CD14-positive monocyte (primary cell): ENCODE measurements at regions of chr1 and their contacts with region 1.

Region 1: DNA sequence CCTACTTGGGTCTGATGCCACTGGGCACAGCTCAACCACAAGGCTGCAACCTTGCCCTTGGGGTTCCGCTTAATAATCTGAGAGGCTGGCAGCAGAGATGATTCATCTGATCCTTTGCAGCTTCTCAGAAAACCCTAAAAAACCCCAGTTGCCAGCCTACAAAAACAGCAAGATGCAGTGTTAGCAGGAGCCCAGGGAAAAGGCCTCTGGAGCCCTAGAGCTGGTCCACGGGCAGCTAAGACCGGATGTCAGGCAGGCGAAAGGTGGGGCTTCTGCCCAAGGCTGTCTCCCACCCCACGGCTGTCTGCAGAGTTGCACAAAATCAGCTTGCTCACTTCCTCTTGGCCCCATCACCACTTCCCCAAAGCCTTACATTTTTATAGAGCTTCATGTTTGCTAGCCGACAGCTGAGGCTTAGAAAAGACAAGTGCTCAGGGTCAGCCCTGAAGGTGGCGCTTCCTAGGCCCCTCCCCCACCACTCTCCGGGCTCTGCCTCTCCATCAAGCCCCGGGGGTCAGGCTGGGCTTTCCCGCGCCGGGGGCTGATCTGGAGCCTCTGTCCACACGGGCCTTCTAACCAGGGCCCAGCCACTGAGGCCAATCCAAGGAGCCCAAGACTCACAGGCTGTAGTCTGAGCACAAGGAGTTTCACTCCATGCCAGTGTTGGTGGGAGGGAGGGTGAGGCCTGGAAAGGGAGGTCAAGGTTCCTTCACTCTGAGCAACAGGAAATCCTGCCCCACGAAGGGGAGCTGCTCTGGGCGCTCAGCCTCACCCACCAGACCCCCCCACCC is 4.2 kb upstream of the ADORA3 start:
- DNase-seq: peak; percentile 94 to 95 (median 95)
- H3K4me3 ChIP-seq: peak overlapping the region; percentile 1 to 64 (median 24)
- H3K4me3 Mint-ChIP-seq: peak overlapping the region; percentile 49 to 69
- H3K27ac ChIP-seq: peak overlapping the region; percentile 98 to 100
- H3K27ac Mint-ChIP-seq: peak overlapping the region; percentile 89 to 99 (median 99)
- H3K4me1 ChIP-seq: peaks cover 74 to 76% of the 10 kb centered on the region in 2 donors
- H3K4me1 Mint-ChIP-seq: peaks cover 45% of the 10 kb centered on the region
- H3K27me3 ChIP-seq: no peaks in the 10 kb centered on the region
- H3K27me3 Mint-ChIP-seq: no peaks in the 10 kb centered on the region
- CTCF ChIP-seq: no peak

Region 2: DNA sequence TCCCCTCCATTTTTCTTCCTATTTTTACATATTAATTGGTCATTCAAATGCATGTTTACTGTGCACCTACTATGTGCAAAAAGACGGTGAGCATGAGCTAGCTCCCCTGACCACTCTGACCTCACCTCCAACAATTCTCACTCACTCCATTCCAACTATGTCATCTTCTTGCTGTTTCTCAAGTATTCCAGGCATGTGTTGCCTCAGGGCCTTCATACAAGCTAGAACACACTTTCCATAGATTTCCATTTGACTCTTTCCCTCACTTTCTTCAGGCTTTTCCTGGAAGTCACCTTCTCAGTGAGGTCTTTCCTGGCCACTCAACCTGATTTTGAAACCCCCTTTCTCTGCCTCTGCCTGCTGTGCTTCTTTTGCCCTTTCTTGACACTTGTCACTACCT is 184.4 kb before region 1 on chr1:
- intact Hi-C with region 1: no loop called
- DNase-seq: no peak
- H3K4me3 ChIP-seq: no peak overlapping the region
- H3K4me3 Mint-ChIP-seq: no peak overlapping the region
- H3K27ac ChIP-seq: no peak overlapping the region
- H3K27ac Mint-ChIP-seq: no peak overlapping the region
- H3K4me1 ChIP-seq: no peaks in the 10 kb centered on the region
- H3K4me1 Mint-ChIP-seq: no peaks in the 10 kb centered on the region
- H3K27me3 ChIP-seq: no peaks in the 10 kb centered on the region
- H3K27me3 Mint-ChIP-seq: peaks cover 4 to 8% (median 6%) of the 10 kb centered on the region in 3 donors
- CTCF ChIP-seq: no peak

Region 3: GRCh38 chr1:111454859-111455641 is 52.6 kb before region 1 on chr1:
- intact Hi-C with region 1: loop called in 1 of 2 experiments (anchors 10 kb)
- DNase-seq: no peak
- H3K4me3 ChIP-seq: no peak overlapping the region
- H3K4me3 Mint-ChIP-seq: no peak overlapping the region
- H3K27ac ChIP-seq: no peak overlapping the region
- H3K27ac Mint-ChIP-seq: peak overlapping the region in 2 of 7 donors; percentile 41 to 72
- H3K4me1 ChIP-seq: peaks cover 8 to 19% of the 10 kb centered on the region in 2 donors
- H3K4me1 Mint-ChIP-seq: peaks cover 27% of the 10 kb centered on the region
- H3K27me3 ChIP-seq: no peaks in the 10 kb centered on the region
- H3K27me3 Mint-ChIP-seq: peaks cover 0 to 2% (median 0%) of the 10 kb centered on the region in 3 donors
- CTCF ChIP-seq: no peak

Region 4: GRCh38 chr1:111471012-111471411 is 36.6 kb before region 1 on chr1:
- intact Hi-C with region 1: loop called (anchors 5 kb)
- DNase-seq: peak; percentile 91 to 93 (median 92)
- H3K4me3 ChIP-seq: peak overlapping the region in 2 of 3 experiments; percentile 34 to 66
- H3K4me3 Mint-ChIP-seq: no peak overlapping the region
- H3K27ac ChIP-seq: peak overlapping the region; percentile 66 to 96
- H3K27ac Mint-ChIP-seq: no peak overlapping the region
- H3K4me1 ChIP-seq: peaks cover 53 to 61% of the 10 kb centered on the region in 2 donors
- H3K4me1 Mint-ChIP-seq: peaks cover 19% of the 10 kb centered on the region
- H3K27me3 ChIP-seq: no peaks in the 10 kb centered on the region
- H3K27me3 Mint-ChIP-seq: no peaks in the 10 kb centered on the region
- CTCF ChIP-seq: no peak

Region 5: GRCh38 chr1:111600886-111601386 is 93.3 kb after region 1 on chr1:
- intact Hi-C with region 1: no loop called
- DNase-seq: no peak
- H3K4me3 ChIP-seq: no peak overlapping the region
- H3K4me3 Mint-ChIP-seq: no peak overlapping the region
- H3K27ac ChIP-seq: no peak overlapping the region
- H3K27ac Mint-ChIP-seq: peak overlapping the region in 1 of 7 donors; percentile 10
- H3K4me1 ChIP-seq: peaks cover 0 to 6% of the 10 kb centered on the region in 2 donors
- H3K4me1 Mint-ChIP-seq: peaks cover 21% of the 10 kb centered on the region
- H3K27me3 ChIP-seq: no peaks in the 10 kb centered on the region
- H3K27me3 Mint-ChIP-seq: peaks cover 0 to 2% (median 2%) of the 10 kb centered on the region in 3 donors
- CTCF ChIP-seq: no peak

Region 6: DNA sequence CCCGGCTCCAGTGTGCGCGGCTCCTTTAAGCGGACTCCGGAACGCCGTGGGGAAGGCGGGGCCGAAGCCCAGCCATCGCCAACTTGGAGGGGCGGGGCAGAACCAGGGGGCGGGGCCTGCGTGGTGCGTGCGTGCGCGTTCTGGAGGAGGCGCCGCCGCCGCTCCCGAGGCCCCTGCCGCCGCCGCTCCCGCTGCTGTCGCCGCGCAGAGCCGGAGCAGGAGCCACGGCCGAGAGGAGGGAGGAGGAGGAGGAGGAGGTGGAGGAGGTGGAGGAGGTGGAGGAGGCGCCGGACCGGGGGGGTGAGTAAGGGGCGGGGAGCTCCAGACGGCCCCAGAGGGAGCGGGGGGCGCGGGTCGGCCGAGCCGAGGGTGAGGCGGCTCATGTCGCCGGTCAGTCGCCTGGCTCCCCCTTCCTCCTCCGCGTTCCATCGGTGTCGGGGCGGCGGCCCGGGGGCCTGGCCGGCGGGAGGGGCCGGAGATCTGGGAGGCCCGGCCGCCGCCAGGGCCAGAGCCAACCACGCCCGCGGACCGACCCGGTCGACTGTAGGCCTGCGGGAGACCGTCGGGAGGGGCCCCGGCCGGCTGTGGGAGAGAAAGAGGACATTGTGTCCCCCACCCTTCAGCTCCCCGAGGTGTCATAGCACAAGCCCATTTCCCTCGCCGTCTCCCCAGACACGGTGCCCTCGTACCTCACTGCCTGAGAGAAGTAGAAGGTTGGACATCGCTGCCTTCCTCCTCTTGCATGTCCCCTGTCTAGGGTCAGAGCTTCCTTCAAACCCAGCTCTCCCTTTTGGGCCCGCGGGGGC is 112.2 kb after region 1 on chr1 and contains the start of gene RAP1A:
- intact Hi-C with region 1: loop called in 1 of 2 experiments (anchors 2 kb)
- DNase-seq: peak; percentile 82 to 86 (median 85)
- H3K4me3 ChIP-seq: peak within 1 kb of the TSS; percentile 65 to 89 (median 79)
- H3K4me3 Mint-ChIP-seq: peak within 1 kb of the TSS; percentile 79 to 96
- H3K27ac ChIP-seq: peak within 1 kb of the TSS; percentile 86 to 89
- H3K27ac Mint-ChIP-seq: peak within 1 kb of the TSS; percentile 93 to 98 (median 97)
- H3K4me1 ChIP-seq: peaks cover 58 to 70% of the 10 kb centered on the region in 2 donors
- H3K4me1 Mint-ChIP-seq: peaks cover 72% of the 10 kb centered on the region
- H3K27me3 ChIP-seq: no peaks in the 10 kb centered on the region
- H3K27me3 Mint-ChIP-seq: no peaks in the 10 kb centered on the region
- CTCF ChIP-seq: no peak
- polyA plus RNA-seq, gene RAP1A: 41.2 to 79.1 (median 75.3) TPM

Region 7: DNA sequence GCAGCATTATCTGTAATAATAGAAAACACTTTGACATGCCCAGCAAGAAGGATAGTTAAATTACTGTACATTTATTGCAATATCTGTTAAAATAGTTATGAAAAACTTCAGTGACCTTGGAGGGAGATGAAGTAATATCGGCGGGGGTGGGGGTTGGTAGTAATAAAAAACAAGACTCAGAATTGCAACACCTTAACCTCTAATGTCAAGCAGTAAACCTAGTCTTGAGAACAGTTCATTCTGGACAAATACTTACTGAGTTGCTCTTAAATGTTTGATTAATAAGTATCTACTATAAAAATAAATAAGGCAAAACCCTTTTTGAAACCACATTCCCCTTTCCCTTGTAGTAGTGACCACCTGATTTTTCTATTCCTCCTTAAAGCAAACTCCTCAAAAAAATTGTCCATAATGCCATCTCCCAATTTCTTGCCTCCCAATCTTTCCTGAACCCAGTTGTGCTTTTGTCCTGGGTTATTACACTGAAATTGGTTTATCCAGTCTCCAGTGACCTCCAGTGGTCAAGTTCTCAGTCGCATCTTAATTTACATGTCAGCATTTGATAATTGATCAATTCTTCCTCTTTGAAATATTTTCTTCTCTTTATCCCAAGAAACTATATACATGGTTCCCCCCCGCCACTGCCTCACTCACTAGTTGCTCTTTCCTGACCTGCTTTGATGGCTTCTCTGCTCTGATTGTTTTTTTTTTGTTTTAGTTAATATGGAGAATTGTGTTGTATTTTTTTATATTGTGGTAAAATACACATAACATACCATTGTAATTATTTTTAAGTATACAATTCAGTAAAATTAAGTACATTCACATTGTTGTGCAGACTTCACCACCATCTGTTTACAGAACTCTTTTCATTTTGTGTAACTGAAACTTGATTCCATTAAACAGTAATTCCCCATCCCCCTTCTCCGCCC is 148.7 kb after region 1 on chr1:
- intact Hi-C with region 1: loop called in 1 of 2 experiments (anchors 2 kb)
- DNase-seq: peak; percentile 5 to 38 (median 37)
- H3K4me3 ChIP-seq: no peak overlapping the region
- H3K4me3 Mint-ChIP-seq: no peak overlapping the region
- H3K27ac ChIP-seq: peak overlapping the region in 1 of 2 donors; percentile 51
- H3K27ac Mint-ChIP-seq: peak overlapping the region; percentile 56 to 94 (median 79)
- H3K4me1 ChIP-seq: peaks cover 33 to 54% of the 10 kb centered on the region in 2 donors
- H3K4me1 Mint-ChIP-seq: peaks cover 40% of the 10 kb centered on the region
- H3K27me3 ChIP-seq: no peaks in the 10 kb centered on the region
- H3K27me3 Mint-ChIP-seq: no peaks in the 10 kb centered on the region
- CTCF ChIP-seq: peak; percentile 69

Region 8: DNA sequence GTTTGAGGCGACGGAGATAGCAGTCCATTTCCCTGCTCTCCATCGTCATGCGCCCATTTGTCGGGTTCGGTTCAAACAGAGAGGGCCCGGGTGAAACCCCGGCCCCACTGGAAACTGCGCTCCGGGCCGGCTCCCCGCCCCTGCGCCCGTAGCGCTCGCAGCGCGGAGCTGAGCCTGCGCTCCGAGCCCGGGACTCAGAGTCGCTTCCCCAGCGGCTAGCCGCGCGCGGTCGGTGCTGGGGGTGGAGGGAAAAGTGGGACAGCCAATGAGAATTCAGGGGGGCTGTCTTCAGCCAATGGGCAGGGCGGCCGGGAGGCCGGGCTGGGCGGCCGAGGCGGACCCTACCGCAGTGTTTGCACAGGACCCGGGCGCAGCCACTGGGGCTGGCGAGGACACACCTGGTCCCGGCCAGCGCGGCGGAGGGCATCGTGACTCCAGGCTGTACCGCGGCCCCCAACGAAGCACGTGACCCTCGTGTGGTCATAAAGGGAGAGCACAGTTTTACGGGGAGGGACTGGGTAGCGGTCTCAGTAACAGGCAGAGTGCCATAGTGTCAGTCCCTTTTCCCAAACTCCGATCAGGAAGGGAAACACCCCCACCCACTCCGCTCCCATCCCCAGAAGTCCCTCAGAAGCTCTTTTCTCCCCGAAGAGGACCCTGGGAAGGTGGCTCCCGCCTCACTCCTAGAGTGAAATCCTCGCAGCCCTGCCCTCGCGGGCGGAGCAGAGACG is 231.8 kb after region 1 on chr1 and contains the start of gene INKA2:
- intact Hi-C with region 1: loop called in 1 of 2 experiments (anchors 10 kb)
- DNase-seq: peak; percentile 80 to 86 (median 82)
- H3K4me3 ChIP-seq: peak within 1 kb of the TSS; percentile 46 to 79 (median 63)
- H3K4me3 Mint-ChIP-seq: peak within 1 kb of the TSS; percentile 89 to 98
- H3K27ac ChIP-seq: peak within 1 kb of the TSS; percentile 78 to 81
- H3K27ac Mint-ChIP-seq: peak within 1 kb of the TSS; percentile 83 to 99 (median 95)
- H3K4me1 ChIP-seq: peaks cover 58 to 62% of the 10 kb centered on the region in 2 donors
- H3K4me1 Mint-ChIP-seq: peaks cover 31% of the 10 kb centered on the region
- H3K27me3 ChIP-seq: peaks cover 22 to 54% of the 10 kb centered on the region in 2 donors
- H3K27me3 Mint-ChIP-seq: peaks cover 51 to 70% (median 54%) of the 10 kb centered on the region in 3 donors
- CTCF ChIP-seq: no peak
- polyA plus RNA-seq, gene INKA2: 1.8 to 6.6 (median 2.0) TPM